Dorsolateral prefrontal cortex (tissue), 120 donors: ENCODE measurements at regions of chr4 and their contacts with region 1.

Region 1: GRCh38 chr4:140851032-140851636 is 94.9 kb upstream of the TBC1D9 start:
- DNase-seq: peak in 2 of 10 donors; percentile 43 to 63
- H3K4me3 ChIP-seq: no peak overlapping the region
- H3K27ac ChIP-seq: no peak overlapping the region
- H3K27me3 ChIP-seq: peaks cover 0 to 15% (median 0%) of the 10 kb centered on the region in 45 donors
- CTCF ChIP-seq: peak; percentile 70 to 97 (median 82)

Region 2: GRCh38 chr4:140609548-140610425 is 241.3 kb before region 1 on chr4:
- intact Hi-C with region 1: loop called in 1 of 2 experiments (anchors 5 kb)
- DNase-seq: no peak
- H3K4me3 ChIP-seq: peak overlapping the region in 19 of 59 donors; percentile 0 to 35 (median 10)
- H3K27ac ChIP-seq: peak overlapping the region in 1 of 59 donors; percentile 39
- H3K27me3 ChIP-seq: peaks cover 0 to 7% (median 0%) of the 10 kb centered on the region in 45 donors
- CTCF ChIP-seq: peak; percentile 31 to 84 (median 60)

Region 3: GRCh38 chr4:140903522-140904475 is 52.7 kb after region 1 on chr4:
- intact Hi-C with region 1: no loop called
- DNase-seq: peak in 1 of 10 donors; percentile 15
- H3K4me3 ChIP-seq: no peak overlapping the region
- H3K27ac ChIP-seq: no peak overlapping the region
- H3K27me3 ChIP-seq: no peaks in the 10 kb centered on the region
- CTCF ChIP-seq: no peak